CD8-positive, alpha-beta T cell (primary cell): ENCODE measurements at regions of chr11 and their contacts with region 1.

Region 1: DNA sequence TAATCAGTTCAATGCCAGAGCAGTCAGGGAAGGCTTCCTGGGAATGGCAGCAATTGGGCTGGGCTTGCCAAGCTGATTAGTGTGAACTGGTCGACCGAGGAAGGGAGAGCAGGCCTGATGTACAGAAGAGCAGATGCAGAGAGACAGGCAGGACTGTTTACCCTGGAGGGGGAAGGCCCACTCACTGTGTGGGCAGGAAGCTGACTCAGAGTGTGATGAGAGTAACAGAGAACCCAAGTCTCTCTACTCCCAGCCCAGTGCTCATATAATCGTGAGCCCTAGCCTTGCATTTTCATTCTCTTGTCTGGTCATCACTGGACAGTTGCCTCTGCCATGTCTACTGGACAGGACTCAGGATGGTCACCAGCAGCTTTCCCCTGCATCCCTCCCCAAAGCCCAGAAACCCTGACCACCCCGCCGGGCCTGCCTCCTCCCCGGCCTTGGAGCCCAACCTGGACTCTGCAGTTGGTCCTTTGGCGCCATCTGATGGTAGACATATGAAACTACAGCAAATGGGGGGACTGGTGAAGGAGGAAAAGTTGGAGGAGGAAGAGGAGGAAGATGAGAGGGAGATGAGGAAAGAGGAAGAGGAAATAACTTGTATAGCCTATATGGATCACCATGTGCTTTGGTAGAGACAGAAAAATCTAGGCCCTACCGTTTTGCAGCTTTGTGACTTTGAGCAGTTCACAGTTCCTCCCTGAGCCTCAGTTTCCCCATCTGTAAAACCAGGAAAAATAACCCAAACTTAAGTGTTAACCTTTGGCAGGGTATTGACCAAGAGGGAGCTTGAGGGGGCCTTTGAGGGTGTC is 43.4 kb upstream of the PRDM11 start:
- DNase-seq: peak; percentile 25 to 87 (median 66)
- ATAC-seq: peak; percentile 92
- H3K4me3 ChIP-seq: peak overlapping the region in 1 of 2 experiments; percentile 37
- H3K4me3 Mint-ChIP-seq: peak overlapping the region; percentile 70
- H3K27ac ChIP-seq: peak overlapping the region in 1 of 2 experiments; percentile 64
- H3K27ac Mint-ChIP-seq: no peak overlapping the region
- H3K4me1 ChIP-seq: peaks cover 14% of the 10 kb centered on the region
- H3K4me1 Mint-ChIP-seq: peaks cover 11% of the 10 kb centered on the region
- H3K27me3 ChIP-seq: no peaks in the 10 kb centered on the region
- H3K27me3 Mint-ChIP-seq: peaks cover 12% of the 10 kb centered on the region
- CTCF ChIP-seq: peak; percentile 94

Region 2: GRCh38 chr11:44911029-44911814 is 191.8 kb before region 1 on chr11:
- CTCF ChIA-PET with region 1: interaction called, 13 read pairs
- POLR2A ChIA-PET with region 1: no interaction called
- intact Hi-C with region 1: no loop called
- DNase-seq: peak; percentile 62 to 90 (median 82)
- ATAC-seq: peak; percentile 64
- H3K4me3 ChIP-seq: no peak overlapping the region
- H3K4me3 Mint-ChIP-seq: no peak overlapping the region
- H3K27ac ChIP-seq: no peak overlapping the region
- H3K27ac Mint-ChIP-seq: no peak overlapping the region
- H3K4me1 ChIP-seq: no peaks in the 10 kb centered on the region
- H3K4me1 Mint-ChIP-seq: peaks cover 3% of the 10 kb centered on the region
- H3K27me3 ChIP-seq: no peaks in the 10 kb centered on the region
- H3K27me3 Mint-ChIP-seq: no peaks in the 10 kb centered on the region
- CTCF ChIP-seq: peak; percentile 61

Region 3: GRCh38 chr11:44936525-44936924 is 166.5 kb before region 1 on chr11:
- CTCF ChIA-PET with region 1: interaction called, 1,504 read pairs
- POLR2A ChIA-PET with region 1: interaction called, 29 read pairs
- intact Hi-C with region 1: loop called (anchors 1 kb)
- DNase-seq: peak; percentile 66 to 92 (median 85)
- ATAC-seq: peak; percentile 94
- H3K4me3 ChIP-seq: no peak overlapping the region
- H3K4me3 Mint-ChIP-seq: no peak overlapping the region
- H3K27ac ChIP-seq: no peak overlapping the region
- H3K27ac Mint-ChIP-seq: no peak overlapping the region
- H3K4me1 ChIP-seq: no peaks in the 10 kb centered on the region
- H3K4me1 Mint-ChIP-seq: peaks cover 3% of the 10 kb centered on the region
- H3K27me3 ChIP-seq: no peaks in the 10 kb centered on the region
- H3K27me3 Mint-ChIP-seq: no peaks in the 10 kb centered on the region
- CTCF ChIP-seq: peak; percentile 86

Region 4: DNA sequence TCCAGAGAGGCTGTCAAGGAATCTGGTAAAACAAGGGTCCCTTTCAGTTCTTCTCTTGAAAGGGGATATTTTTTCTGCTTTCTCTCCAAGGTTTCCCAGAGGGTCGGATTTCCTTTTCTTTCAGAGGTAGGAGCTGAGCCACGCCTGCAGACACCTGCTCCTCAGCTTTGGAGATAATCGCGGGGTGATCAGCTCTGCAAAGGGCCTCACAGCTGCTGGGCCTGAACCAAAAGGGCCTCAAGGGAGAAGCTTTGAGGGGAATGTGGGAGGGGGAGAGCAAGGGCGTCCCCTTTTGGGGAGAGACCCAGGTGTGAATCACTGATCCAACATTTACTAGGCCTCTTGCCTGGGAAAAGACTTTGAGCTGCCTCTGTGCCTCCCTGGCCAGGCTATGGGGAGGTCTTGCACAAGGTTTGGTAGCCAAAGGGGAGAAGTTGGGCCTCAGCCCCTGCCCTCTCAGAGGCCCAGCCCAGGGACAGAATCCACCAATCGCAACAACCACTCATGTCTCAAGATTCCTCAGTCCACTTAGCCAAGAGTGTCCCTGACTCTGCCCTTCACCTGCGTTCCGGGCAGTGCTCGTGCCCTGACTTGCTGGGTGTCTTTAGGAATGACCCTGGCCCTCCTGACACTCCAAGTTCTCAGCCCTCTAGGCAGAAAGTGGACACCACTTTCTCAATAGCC is 138.3 kb before region 1 on chr11:
- CTCF ChIA-PET with region 1: interaction called, 33 read pairs
- POLR2A ChIA-PET with region 1: no interaction called
- intact Hi-C with region 1: no loop called
- DNase-seq: no peak
- ATAC-seq: no peak
- H3K4me3 ChIP-seq: no peak overlapping the region
- H3K4me3 Mint-ChIP-seq: no peak overlapping the region
- H3K27ac ChIP-seq: no peak overlapping the region
- H3K27ac Mint-ChIP-seq: no peak overlapping the region
- H3K4me1 ChIP-seq: no peaks in the 10 kb centered on the region
- H3K4me1 Mint-ChIP-seq: no peaks in the 10 kb centered on the region
- H3K27me3 ChIP-seq: no peaks in the 10 kb centered on the region
- H3K27me3 Mint-ChIP-seq: no peaks in the 10 kb centered on the region
- CTCF ChIP-seq: no peak

Region 5: GRCh38 chr11:45031912-45032519 is 71.0 kb before region 1 on chr11:
- CTCF ChIA-PET with region 1: interaction called, 18 read pairs
- POLR2A ChIA-PET with region 1: no interaction called
- intact Hi-C with region 1: no loop called
- DNase-seq: peak in 1 of 9 experiments; percentile 18
- ATAC-seq: no peak
- H3K4me3 ChIP-seq: no peak overlapping the region
- H3K4me3 Mint-ChIP-seq: no peak overlapping the region
- H3K27ac ChIP-seq: no peak overlapping the region
- H3K27ac Mint-ChIP-seq: no peak overlapping the region
- H3K4me1 ChIP-seq: no peaks in the 10 kb centered on the region
- H3K4me1 Mint-ChIP-seq: no peaks in the 10 kb centered on the region
- H3K27me3 ChIP-seq: no peaks in the 10 kb centered on the region
- H3K27me3 Mint-ChIP-seq: no peaks in the 10 kb centered on the region
- CTCF ChIP-seq: no peak

Region 6: GRCh38 chr11:45079943-45080719 is 22.9 kb before region 1 on chr11:
- CTCF ChIA-PET with region 1: interaction called, 40 read pairs
- POLR2A ChIA-PET with region 1: interaction called, 5 read pairs
- intact Hi-C with region 1: loop called in 1 of 2 experiments (anchors 2 kb)
- DNase-seq: peak in 8 of 9 experiments; percentile 48 to 87 (median 68)
- ATAC-seq: peak; percentile 83
- H3K4me3 ChIP-seq: peak overlapping the region; percentile 10 to 25
- H3K4me3 Mint-ChIP-seq: peak overlapping the region; percentile 62
- H3K27ac ChIP-seq: peak overlapping the region; percentile 31 to 69
- H3K27ac Mint-ChIP-seq: peak overlapping the region; percentile 96
- H3K4me1 ChIP-seq: peaks cover 51% of the 10 kb centered on the region
- H3K4me1 Mint-ChIP-seq: peaks cover 54% of the 10 kb centered on the region
- H3K27me3 ChIP-seq: no peaks in the 10 kb centered on the region
- H3K27me3 Mint-ChIP-seq: no peaks in the 10 kb centered on the region
- CTCF ChIP-seq: no peak